A673 (cell line): ENCODE measurements at regions of chr7 and their contacts with region 1.

Region 1: GRCh38 chr7:1919539-1920265 is 249.6 kb downstream of the ELFN1 start:
- DNase-seq: no peak
- H3K4me3 ChIP-seq: no peak overlapping the region
- H3K27ac ChIP-seq: no peak overlapping the region
- H3K4me1 ChIP-seq: peaks cover 38% of the 10 kb centered on the region
- H3K27me3 ChIP-seq: no peaks in the 10 kb centered on the region
- CTCF ChIP-seq: no peak

Region 2: GRCh38 chr7:1659696-1660095 is 260.0 kb before region 1 on chr7:
- CTCF ChIA-PET with region 1: no interaction called
- POLR2A ChIA-PET with region 1: no interaction called
- intact Hi-C with region 1: loop called (anchors 5 kb)
- DNase-seq: no peak
- H3K4me3 ChIP-seq: no peak overlapping the region
- H3K27ac ChIP-seq: no peak overlapping the region
- H3K4me1 ChIP-seq: peaks cover 6% of the 10 kb centered on the region
- H3K27me3 ChIP-seq: peaks cover 20% of the 10 kb centered on the region
- CTCF ChIP-seq: no peak